Breast epithelium (tissue), 4 donors: ENCODE measurements at regions of chr1 and their contacts with region 1.

Region 1: GRCh38 chr1:151596166-151596953 is 15.5 kb upstream of the SNX27 start:
- DNase-seq: no peak
- H3K4me3 ChIP-seq: no peak overlapping the region
- H3K27ac ChIP-seq: no peak overlapping the region
- H3K4me1 ChIP-seq: no peaks in the 10 kb centered on the region
- H3K27me3 ChIP-seq: no peaks in the 10 kb centered on the region
- CTCF ChIP-seq: no peak
- POLR2A ChIP-seq: no peak

Region 2: DNA sequence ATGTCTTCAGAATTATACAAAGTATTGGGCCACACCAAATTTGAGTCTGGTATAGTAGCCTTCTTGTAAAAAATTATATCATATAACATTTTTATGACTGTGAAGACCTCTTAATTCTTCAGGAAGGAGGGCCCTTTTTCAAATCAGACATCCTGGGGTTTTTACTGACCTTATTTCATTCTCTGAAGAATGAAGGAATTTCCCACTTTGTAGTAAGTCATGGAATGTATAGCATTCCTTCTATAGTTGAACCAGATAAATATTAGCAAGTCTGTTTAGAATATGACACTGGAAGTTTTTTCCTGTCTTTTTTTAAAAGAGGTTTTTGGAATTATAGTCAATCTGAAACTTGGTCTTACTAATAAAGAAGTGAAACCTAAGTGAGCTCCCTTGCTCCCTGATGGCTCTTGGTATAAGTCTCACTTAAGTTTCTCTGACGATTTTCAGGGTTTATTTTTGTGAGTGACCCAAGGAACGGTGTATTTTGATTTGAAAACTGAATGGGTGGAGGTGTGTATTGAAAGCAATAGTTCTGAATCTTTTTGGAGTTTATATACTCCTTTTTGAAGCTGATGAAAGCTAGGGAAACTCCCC is 39.2 kb after region 1 on chr1:
- intact Hi-C with region 1: loop called (anchors 2 kb)
- DNase-seq: no peak
- H3K4me3 ChIP-seq: no peak overlapping the region
- H3K27ac ChIP-seq: no peak overlapping the region
- H3K4me1 ChIP-seq: no peaks in the 10 kb centered on the region
- H3K27me3 ChIP-seq: no peaks in the 10 kb centered on the region
- CTCF ChIP-seq: no peak
- POLR2A ChIP-seq: no peak